Breast epithelium (tissue), 4 donors: ENCODE measurements at regions of chr3 and their contacts with region 1.

Region 1: GRCh38 chr3:46168583-46169345 is 39.3 kb downstream of the CCR1 start:
- DNase-seq: no peak
- H3K4me3 ChIP-seq: no peak overlapping the region
- H3K27ac ChIP-seq: no peak overlapping the region
- H3K4me1 ChIP-seq: no peaks in the 10 kb centered on the region
- H3K27me3 ChIP-seq: no peaks in the 10 kb centered on the region
- CTCF ChIP-seq: no peak
- POLR2A ChIP-seq: no peak

Region 2: DNA sequence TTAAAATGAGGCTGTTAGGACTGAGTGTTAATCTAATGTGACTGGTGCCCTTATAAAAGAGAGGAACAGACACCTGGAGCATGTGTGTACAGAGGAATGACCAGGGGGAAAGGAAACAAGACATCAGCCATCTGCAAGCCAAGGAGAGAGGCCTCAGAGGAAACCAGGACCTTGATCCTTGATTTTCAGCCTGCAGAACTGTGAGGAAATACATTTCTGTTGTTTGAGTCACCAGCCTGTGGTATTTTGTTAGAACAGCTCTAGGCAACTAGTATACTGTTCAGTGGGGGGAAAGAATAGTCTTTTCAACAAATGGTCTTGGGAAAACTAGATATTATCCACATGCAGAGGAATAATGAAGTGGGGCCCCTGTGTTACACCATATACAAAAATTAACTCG is 41.3 kb before region 1 on chr3:
- intact Hi-C with region 1: no loop called
- DNase-seq: no peak
- H3K4me3 ChIP-seq: no peak overlapping the region
- H3K27ac ChIP-seq: peak overlapping the region in 1 of 2 donors; percentile 3
- H3K4me1 ChIP-seq: peaks cover 0 to 2% of the 10 kb centered on the region in 2 donors
- H3K27me3 ChIP-seq: no peaks in the 10 kb centered on the region
- CTCF ChIP-seq: no peak
- POLR2A ChIP-seq: no peak

Region 3: GRCh38 chr3:46378426-46378942 is 209.7 kb after region 1 on chr3:
- intact Hi-C with region 1: loop called (anchors 5 kb)
- DNase-seq: no peak
- H3K4me3 ChIP-seq: no peak overlapping the region
- H3K27ac ChIP-seq: no peak overlapping the region
- H3K4me1 ChIP-seq: no peaks in the 10 kb centered on the region
- H3K27me3 ChIP-seq: peaks cover 0 to 3% of the 10 kb centered on the region in 2 donors
- CTCF ChIP-seq: peak in 2 of 3 donors; percentile 34 to 36
- POLR2A ChIP-seq: no peak